ENCODE measurements at regions of chr5 and their contacts with region 1.

Region 1: DNA sequence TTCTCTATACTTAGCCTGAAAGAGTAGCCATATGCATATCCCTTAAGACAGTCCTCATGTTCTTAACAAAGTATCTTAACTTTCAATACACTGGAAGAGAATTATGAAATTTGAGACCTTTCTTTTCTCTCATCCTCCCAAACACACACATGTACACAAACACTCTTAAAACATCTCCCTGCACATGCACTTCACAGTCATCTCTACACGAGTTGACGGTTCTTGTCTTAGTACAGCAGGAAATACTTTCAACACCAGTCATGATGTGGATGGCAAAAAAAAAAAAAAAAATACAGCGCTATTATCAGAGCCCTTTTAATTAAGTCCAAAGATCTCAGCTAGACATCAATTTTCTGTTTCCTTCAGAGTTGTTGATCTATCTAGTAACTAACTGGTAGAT is 43.6 kb upstream of the PCSK1 start:
- DNase-seq: no peak
- ATAC-seq: no peak
- H3K4me3 Mint-ChIP-seq: no peak overlapping the region
- H3K27ac Mint-ChIP-seq: no peak overlapping the region
- H3K4me1 Mint-ChIP-seq: no peaks in the 10 kb centered on the region
- H3K27me3 Mint-ChIP-seq: peaks cover 3% of the 10 kb centered on the region

Region 2: GRCh38 chr5:96326902-96327301 is 149.8 kb before region 1 on chr5:
- CTCF ChIA-PET with region 1: no interaction called
- POLR2A ChIA-PET with region 1: no interaction called
- intact Hi-C with region 1: no loop called
- DNase-seq: no peak
- ATAC-seq: no peak
- H3K4me3 Mint-ChIP-seq: no peak overlapping the region
- H3K27ac Mint-ChIP-seq: no peak overlapping the region
- H3K4me1 Mint-ChIP-seq: peaks cover 7% of the 10 kb centered on the region
- H3K27me3 Mint-ChIP-seq: peaks cover 30% of the 10 kb centered on the region

Region 3: DNA sequence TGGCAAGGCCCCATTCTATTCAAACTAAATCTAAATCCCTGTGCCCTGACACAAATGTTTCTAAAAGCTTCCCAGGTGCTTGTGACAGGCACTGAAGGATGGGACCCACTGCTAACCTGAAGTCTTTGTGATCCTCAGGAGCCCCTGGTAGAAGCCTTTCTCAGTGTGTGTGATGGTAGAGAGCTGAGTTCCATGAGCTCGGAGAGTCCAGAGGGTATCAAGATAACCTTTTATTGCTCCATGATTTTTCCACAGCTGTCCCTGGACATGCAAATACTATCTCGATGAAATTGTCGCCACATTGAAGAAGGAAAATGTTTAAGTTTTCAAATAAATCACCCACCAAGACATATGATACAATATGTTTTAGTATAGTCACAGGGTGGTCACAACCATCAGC is 193.3 kb after region 1 on chr5:
- CTCF ChIA-PET with region 1: no interaction called
- POLR2A ChIA-PET with region 1: interaction called, 10 read pairs
- intact Hi-C with region 1: no loop called
- DNase-seq: no peak
- ATAC-seq: no peak
- H3K4me3 Mint-ChIP-seq: no peak overlapping the region
- H3K27ac Mint-ChIP-seq: no peak overlapping the region
- H3K4me1 Mint-ChIP-seq: peaks cover 14% of the 10 kb centered on the region
- H3K27me3 Mint-ChIP-seq: no peaks in the 10 kb centered on the region

Measured in activated CD4-positive, alpha-beta T cell treated with anti-CD3 and anti-CD28 coated beads for 36 hours (primary cell).